CD8-positive, alpha-beta T cell (primary cell): ENCODE measurements at regions of chrX and their contacts with region 1.

Region 1: GRCh38 chrX:402857-403256 is 16.1 kb upstream of the PPP2R3B start:
- DNase-seq: no peak
- ATAC-seq: no peak
- H3K4me3 ChIP-seq: no peak overlapping the region
- H3K4me3 Mint-ChIP-seq: no peak overlapping the region
- H3K27ac ChIP-seq: no peak overlapping the region
- H3K27ac Mint-ChIP-seq: no peak overlapping the region
- H3K4me1 ChIP-seq: no peaks in the 10 kb centered on the region
- H3K4me1 Mint-ChIP-seq: no peaks in the 10 kb centered on the region
- H3K27me3 ChIP-seq: no peaks in the 10 kb centered on the region
- H3K27me3 Mint-ChIP-seq: no peaks in the 10 kb centered on the region
- CTCF ChIP-seq: no peak

Region 2: GRCh38 chrX:373637-374471 is 29.0 kb before region 1 on chrX:
- CTCF ChIA-PET with region 1: no interaction called
- POLR2A ChIA-PET with region 1: no interaction called
- intact Hi-C with region 1: loop called in 1 of 2 experiments (anchors 1 kb)
- DNase-seq: peak in 5 of 9 experiments; percentile 22 to 47 (median 26)
- ATAC-seq: peak; percentile 73
- H3K4me3 ChIP-seq: peak overlapping the region; percentile 26 to 27
- H3K4me3 Mint-ChIP-seq: peak overlapping the region; percentile 83
- H3K27ac ChIP-seq: no peak overlapping the region
- H3K27ac Mint-ChIP-seq: no peak overlapping the region
- H3K4me1 ChIP-seq: peaks cover 7% of the 10 kb centered on the region
- H3K4me1 Mint-ChIP-seq: peaks cover 55% of the 10 kb centered on the region
- H3K27me3 ChIP-seq: peaks cover 3 to 13% of the 10 kb centered on the region in 2 experiments
- H3K27me3 Mint-ChIP-seq: peaks cover 31% of the 10 kb centered on the region
- CTCF ChIP-seq: no peak